Left cardiac atrium (tissue), 4 donors: ENCODE measurements at regions of chr6 and their contacts with region 1.

Region 1: DNA sequence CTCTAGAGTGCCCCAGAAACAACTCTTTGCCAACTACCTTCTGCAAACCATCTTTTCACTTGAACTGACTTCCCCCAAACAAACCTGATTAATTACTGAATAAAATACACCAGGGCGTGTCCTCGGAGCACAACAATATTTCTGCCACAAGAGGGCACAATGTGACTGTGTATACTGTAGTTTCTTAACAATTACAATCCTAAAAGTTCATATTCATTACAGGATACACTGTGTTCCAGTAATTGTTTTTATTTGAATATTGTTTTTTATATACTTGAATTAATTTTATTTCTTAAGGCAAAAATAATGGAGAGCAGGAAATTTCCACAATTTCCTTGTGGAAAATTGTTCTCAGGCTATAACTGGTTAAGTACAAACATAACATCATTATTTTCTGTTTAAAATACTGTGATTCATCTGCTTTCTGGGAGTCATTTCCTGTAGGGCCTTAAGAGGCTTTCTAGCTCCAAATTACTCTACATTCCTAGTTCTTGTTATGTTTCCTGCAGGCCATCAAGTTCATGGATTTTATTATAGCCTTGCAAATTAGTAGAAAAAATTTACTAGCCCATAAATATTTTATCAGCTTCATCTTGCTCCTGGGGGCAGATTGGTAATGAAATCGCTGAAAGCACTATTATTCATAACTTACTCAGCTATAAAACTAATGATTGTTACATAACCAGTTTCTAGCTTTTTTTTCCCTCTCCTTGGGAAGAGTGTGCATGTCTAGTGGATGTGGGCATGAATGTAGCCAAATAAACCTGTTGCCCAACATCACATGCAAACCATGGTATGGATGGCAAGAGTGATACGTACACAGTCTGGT is 51.9 kb upstream of the SLC22A16 start:
- DNase-seq: no peak
- ATAC-seq: peak; percentile 83 to 88

Region 2: DNA sequence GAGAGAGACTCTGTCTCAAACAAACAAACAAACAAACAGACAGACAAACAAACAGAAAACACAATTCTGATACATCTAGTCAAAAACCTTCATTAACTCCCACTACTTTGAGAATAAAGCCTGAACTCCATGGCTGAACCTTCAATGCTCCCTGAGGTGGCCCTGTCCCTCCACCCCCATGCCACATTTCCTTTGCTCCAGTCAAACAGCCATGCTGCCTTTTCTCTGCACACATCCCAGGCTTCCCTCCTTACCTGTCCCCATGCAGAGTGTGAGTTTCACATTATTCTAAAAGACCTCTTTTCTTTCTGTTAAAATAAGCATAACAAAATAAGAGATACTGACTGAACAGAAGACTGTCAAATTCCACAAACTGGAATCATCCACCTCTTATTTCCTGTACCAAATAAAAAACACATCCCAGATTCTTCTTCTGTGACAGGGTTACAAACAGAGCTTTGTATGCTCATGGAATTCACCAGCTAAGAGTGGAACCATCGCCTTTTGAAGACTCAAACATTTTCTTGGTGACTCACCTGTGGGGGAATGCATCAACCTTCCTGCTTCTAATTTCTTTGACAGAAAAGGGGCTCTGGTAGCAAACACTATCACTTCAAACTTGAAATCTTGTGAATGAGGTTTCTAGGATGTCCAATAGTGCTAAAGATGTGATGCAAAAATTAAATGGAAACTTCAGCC is 19.1 kb after region 1 on chr6:
- intact Hi-C with region 1: no loop called
- DNase-seq: no peak
- ATAC-seq: no peak

Region 3: GRCh38 chr6:110682460-110682853 is 154.1 kb after region 1 on chr6:
- intact Hi-C with region 1: loop called in 1 of 2 experiments (anchors 5 kb)
- DNase-seq: peak; percentile 27
- ATAC-seq: peak; percentile 97

Region 4: GRCh38 chr6:110859335-110859792 is 331.0 kb after region 1 on chr6:
- intact Hi-C with region 1: no loop called
- DNase-seq: no peak
- ATAC-seq: peak in 1 of 2 donors; percentile 52

Region 5: GRCh38 chr6:110873981-110874879 is 345.9 kb after region 1 on chr6 and contains the start of gene AMD1:
- intact Hi-C with region 1: loop called in 1 of 2 experiments (anchors 5 kb)
- DNase-seq: peak; percentile 98
- ATAC-seq: peak; percentile 86 to 91
- total RNA-seq, gene AMD1: 38.6 to 62.4 TPM

Region 6: GRCh38 chr6:110944681-110945151 is 416.4 kb after region 1 on chr6:
- intact Hi-C with region 1: loop called in 1 of 2 experiments (anchors 5 kb)
- DNase-seq: no peak
- ATAC-seq: peak in 1 of 2 donors; percentile 97

Region 7: DNA sequence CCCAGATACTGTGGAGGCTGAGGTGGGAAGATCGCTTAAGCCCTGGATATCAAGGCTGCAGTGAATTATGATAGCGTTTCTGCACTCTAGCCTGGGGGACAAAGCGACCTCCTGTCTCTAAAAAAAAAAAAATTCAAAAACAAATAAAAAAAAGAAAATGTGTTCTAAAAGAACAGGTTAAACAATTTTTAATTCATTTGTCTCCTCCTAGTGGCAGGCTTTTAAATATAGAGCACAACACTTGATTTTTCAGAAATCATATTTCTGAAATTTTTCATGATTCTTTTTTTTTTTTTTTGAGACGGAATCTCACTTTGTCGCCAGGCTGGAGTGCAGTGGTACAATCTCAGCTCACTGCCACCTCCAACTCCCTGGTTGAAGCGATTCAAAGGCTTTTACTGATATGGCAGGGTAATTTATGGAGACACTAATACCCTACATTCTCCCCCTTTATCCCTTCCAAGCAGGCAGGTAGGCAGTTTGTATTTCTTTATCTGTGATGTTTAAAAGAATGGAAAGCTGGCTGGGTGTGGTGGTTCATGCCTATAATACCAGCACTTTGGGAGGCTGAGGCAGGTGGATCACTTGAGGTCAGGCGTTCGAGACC is 421.5 kb after region 1 on chr6:
- intact Hi-C with region 1: loop called (anchors 2 to 5 kb)
- DNase-seq: no peak
- ATAC-seq: no peak